Activated CD4-positive, alpha-beta T cell treated with anti-CD3 and anti-CD28 coated beads for 36 hours (primary cell): ENCODE measurements at regions of chr12 and their contacts with region 1.

Region 1: GRCh38 chr12:88241862-88242570 is 99.9 kb downstream of the TMTC3 start:
- DNase-seq: peak; percentile 57
- ATAC-seq: peak; percentile 95
- H3K4me3 Mint-ChIP-seq: no peak overlapping the region
- H3K27ac Mint-ChIP-seq: peak overlapping the region; percentile 91
- H3K4me1 Mint-ChIP-seq: peaks cover 36% of the 10 kb centered on the region
- H3K27me3 Mint-ChIP-seq: peaks cover 13% of the 10 kb centered on the region

Region 2: GRCh38 chr12:88141770-88142609 is 100.0 kb before region 1 on chr12 and contains the starts of genes CEP290 and TMTC3:
- CTCF ChIA-PET with region 1: no interaction called
- POLR2A ChIA-PET with region 1: interaction called, 4 read pairs
- intact Hi-C with region 1: loop called in 1 of 2 experiments (anchors 5 kb)
- DNase-seq: peak; percentile 95
- ATAC-seq: peak; percentile 98
- H3K4me3 Mint-ChIP-seq: peak within 1 kb of the TSS; percentile 94
- H3K27ac Mint-ChIP-seq: peak within 1 kb of the TSS; percentile 92
- H3K4me1 Mint-ChIP-seq: peaks cover 42% of the 10 kb centered on the region
- H3K27me3 Mint-ChIP-seq: no peaks in the 10 kb centered on the region
- total RNA-seq, gene CEP290: 15.5 to 17.0 TPM
- total RNA-seq, gene TMTC3: 5.8 to 6.2 TPM

Region 3: GRCh38 chr12:88258396-88258795 is 16.4 kb after region 1 on chr12:
- CTCF ChIA-PET with region 1: no interaction called
- POLR2A ChIA-PET with region 1: no interaction called
- intact Hi-C with region 1: no loop called
- DNase-seq: no peak
- ATAC-seq: no peak
- H3K4me3 Mint-ChIP-seq: no peak overlapping the region
- H3K27ac Mint-ChIP-seq: no peak overlapping the region
- H3K4me1 Mint-ChIP-seq: no peaks in the 10 kb centered on the region
- H3K27me3 Mint-ChIP-seq: peaks cover 11% of the 10 kb centered on the region

Region 4: DNA sequence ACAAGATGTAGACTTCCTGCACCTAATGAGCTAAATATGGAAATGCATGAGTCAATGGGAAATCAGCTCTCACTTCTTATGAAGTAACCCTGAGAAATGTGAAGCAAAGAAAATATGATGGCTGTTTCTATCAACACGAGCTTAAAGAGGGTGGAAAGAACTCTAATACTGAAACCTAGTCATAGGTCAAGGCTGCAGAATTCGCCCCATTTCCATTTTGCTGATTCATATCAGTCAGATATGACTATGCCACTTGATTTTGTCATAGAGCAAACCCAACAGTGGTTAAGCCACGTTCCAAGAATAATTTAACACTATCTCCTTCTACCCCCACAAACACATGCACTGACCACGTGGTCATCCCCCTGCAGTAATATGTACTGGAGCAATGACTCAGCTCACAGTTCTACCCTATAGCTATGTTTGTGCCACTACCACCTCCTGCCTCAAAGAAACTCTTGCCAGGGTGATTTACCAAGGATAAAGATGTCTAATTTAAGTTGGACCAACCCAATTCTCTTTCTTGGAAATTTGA is 57.6 kb after region 1 on chr12:
- CTCF ChIA-PET with region 1: interaction called, 7 read pairs
- POLR2A ChIA-PET with region 1: interaction called, 18 read pairs
- intact Hi-C with region 1: loop called (anchors 1 kb)
- DNase-seq: peak; percentile 79
- ATAC-seq: peak; percentile 90
- H3K4me3 Mint-ChIP-seq: no peak overlapping the region
- H3K27ac Mint-ChIP-seq: peak overlapping the region; percentile 91
- H3K4me1 Mint-ChIP-seq: peaks cover 31% of the 10 kb centered on the region
- H3K27me3 Mint-ChIP-seq: peaks cover 4% of the 10 kb centered on the region

Region 5: DNA sequence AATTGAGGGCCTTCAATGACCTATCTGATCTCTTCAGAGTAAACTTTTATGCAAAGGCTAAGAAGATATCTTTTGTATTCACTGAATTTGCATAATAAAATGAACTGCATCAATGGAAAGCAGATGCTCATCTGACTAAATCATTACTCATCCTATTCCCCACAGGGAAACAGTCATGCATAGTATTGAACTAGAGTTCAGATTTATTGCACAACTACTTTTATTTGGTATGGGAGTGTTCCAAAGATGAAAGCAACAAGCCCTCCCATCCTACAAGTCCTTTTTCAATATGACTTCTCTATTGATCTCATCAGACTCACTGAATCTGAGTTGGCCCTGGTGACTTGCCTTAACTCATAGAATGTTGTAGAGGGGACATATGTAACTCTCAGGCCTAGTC is 178.4 kb after region 1 on chr12:
- CTCF ChIA-PET with region 1: no interaction called
- POLR2A ChIA-PET with region 1: no interaction called
- intact Hi-C with region 1: no loop called
- DNase-seq: no peak
- ATAC-seq: peak; percentile 76
- H3K4me3 Mint-ChIP-seq: no peak overlapping the region
- H3K27ac Mint-ChIP-seq: no peak overlapping the region
- H3K4me1 Mint-ChIP-seq: peaks cover 3% of the 10 kb centered on the region
- H3K27me3 Mint-ChIP-seq: no peaks in the 10 kb centered on the region

Region 6: DNA sequence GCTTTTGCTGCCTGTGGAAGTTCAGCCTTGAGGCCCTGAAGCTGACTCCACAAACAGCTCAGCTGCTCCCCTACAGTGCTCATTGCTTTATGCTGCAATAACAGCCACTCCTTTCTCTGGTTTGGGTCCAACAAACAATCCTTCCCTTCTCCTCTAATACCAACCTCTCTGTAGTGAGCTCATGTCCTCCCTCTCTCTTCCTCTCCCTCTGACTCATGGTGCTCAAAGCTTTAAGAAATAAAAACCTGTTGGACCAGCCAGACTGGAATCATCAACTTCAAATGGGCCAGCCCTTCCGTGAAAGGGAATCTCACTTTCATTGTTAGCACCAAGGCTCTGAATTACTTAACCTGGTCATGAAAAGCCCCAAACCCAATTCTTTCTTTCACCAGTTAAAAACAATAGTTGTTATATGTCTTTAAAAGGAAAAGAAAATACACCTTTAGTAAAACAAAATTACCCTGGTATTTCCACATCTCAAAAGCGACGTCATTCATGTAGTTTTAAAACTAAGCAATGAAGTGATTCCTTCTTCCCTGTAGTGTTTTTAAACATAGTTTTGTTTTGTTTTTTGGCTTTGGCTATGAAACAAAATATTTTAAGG is 983.9 kb after region 1 on chr12:
- CTCF ChIA-PET with region 1: no interaction called
- POLR2A ChIA-PET with region 1: no interaction called
- intact Hi-C with region 1: loop called in 1 of 2 experiments (anchors 5 kb)
- DNase-seq: peak; percentile 71
- ATAC-seq: peak; percentile 80
- H3K4me3 Mint-ChIP-seq: peak overlapping the region; percentile 58
- H3K27ac Mint-ChIP-seq: peak overlapping the region; percentile 99
- H3K4me1 Mint-ChIP-seq: peaks cover 68% of the 10 kb centered on the region
- H3K27me3 Mint-ChIP-seq: no peaks in the 10 kb centered on the region